ENCODE measurements at regions of chr16 and their contacts with region 1.

Region 1: DNA sequence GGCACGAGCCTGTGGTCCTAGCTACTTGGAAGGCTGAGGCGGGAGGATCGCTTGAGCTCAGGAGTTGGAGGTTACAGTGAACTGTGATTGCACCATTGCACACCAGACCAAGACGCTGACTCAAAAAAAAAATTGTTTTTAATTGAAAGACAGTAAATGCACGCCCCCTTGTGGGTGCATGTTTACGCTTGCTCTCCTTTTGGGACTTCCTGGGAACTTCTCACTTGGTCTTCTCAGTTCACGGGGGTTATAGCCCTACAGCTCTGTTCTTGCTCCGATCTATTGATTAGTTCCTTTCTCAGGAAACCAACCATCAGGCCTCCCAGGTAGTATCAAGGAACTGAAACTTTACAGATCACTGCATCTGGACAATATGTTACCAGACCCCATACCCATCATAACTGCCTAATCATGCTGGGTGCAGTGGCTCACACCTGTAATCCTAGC is 14.2 kb upstream of the RIPOR1 start:
- DNase-seq: peak; percentile 89 to 94 (median 91)
- H3K4me3 ChIP-seq: peak overlapping the region in 1 of 7 experiments; percentile 28
- H3K27ac ChIP-seq: no peak overlapping the region
- H3K4me1 ChIP-seq: peaks cover 0 to 43% (median 37%) of the 10 kb centered on the region in 4 experiments
- H3K27me3 ChIP-seq: no peaks in the 10 kb centered on the region

Region 2: DNA sequence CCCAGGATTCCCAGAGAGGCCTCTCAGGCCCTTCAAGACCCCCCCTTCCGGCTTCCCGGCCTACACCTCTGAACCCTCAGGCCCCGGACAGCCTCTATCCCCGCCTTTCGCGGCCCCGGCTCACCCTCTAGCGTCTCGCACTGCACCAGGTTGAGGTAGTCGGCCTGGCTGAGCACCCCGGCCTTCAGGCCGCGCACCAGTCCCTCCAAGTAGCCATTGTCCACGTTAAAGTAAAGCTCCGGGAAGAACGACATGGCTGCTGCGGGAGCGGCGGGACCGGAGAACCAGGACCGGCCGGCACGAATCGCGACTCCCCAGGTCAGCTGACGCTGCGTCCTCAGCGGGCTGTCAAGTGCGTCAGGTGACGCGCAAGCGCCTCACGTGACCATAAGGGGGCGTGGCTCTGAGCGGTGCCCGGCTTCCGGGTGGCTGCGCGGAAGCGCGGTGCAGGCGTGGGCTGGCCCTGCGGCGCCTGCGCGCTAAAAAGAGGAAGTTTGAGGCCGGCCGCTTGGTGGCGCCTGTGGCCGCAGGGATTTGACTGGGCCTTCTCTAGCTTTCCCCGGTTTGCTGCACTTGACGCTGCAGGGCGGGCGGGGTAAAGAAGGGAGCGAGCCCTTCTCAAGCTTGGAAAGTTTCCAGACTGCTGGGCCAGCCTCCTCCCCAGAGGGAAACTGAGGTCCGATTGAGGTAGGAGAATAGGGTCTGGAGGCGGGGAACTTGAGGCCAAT is 33.4 kb before region 1 on chr16 and contains the start of gene ATP6V0D1:
- CTCF ChIA-PET with region 1: interaction called, 35 read pairs
- POLR2A ChIA-PET with region 1: no interaction called
- DNase-seq: peak; percentile 98 to 99 (median 99)
- H3K4me3 ChIP-seq: peak within 1 kb of the TSS; percentile 74 to 99 (median 89)
- H3K27ac ChIP-seq: peak within 1 kb of the TSS; percentile 94 to 98
- H3K4me1 ChIP-seq: peaks cover 5 to 38% (median 31%) of the 10 kb centered on the region in 4 experiments
- H3K27me3 ChIP-seq: no peaks in the 10 kb centered on the region

Region 3: DNA sequence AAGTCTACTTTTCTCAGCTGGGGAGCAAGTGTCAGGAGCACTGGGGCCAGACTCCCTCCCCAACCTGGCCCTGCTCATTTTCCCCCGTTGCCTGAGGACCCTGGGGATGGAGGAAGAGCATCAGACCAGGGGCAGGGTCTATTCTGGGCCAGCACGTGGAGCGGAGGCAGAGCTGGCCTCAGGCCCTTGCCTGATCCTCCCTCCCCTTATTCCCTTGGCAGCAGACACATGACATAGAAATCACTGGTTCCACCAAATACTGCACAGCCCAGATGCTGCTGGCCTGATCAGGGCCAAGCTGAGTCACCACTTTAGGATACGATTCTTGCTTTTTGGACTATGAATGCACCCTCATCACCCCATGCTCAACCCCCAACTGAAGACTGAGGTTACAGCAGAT is 15.3 kb before region 1 on chr16:
- CTCF ChIA-PET with region 1: interaction called, 228 read pairs
- POLR2A ChIA-PET with region 1: interaction called, 3 read pairs
- DNase-seq: no peak
- H3K4me3 ChIP-seq: no peak overlapping the region
- H3K27ac ChIP-seq: no peak overlapping the region
- H3K4me1 ChIP-seq: peaks cover 0 to 3% (median 2%) of the 10 kb centered on the region in 4 experiments
- H3K27me3 ChIP-seq: no peaks in the 10 kb centered on the region